Esophagus squamous epithelium (tissue), 5 donors: ENCODE measurements at regions of chr1 and their contacts with region 1.

Region 1: GRCh38 chr1:100860397-100860991 is 34.1 kb downstream of the EXTL2 start:
- DNase-seq: no peak
- H3K4me3 ChIP-seq: no peak overlapping the region
- H3K27ac ChIP-seq: no peak overlapping the region
- H3K4me1 ChIP-seq: no peaks in the 10 kb centered on the region
- H3K27me3 ChIP-seq: no peaks in the 10 kb centered on the region
- CTCF ChIP-seq: no peak
- POLR2A ChIP-seq: no peak

Region 2: GRCh38 chr1:100616121-100616621 is 244.3 kb before region 1 on chr1:
- intact Hi-C with region 1: loop called (anchors 5 kb)
- DNase-seq: no peak
- H3K4me3 ChIP-seq: no peak overlapping the region
- H3K27ac ChIP-seq: no peak overlapping the region
- H3K4me1 ChIP-seq: no peaks in the 10 kb centered on the region
- H3K27me3 ChIP-seq: no peaks in the 10 kb centered on the region
- CTCF ChIP-seq: no peak
- POLR2A ChIP-seq: no peak